B cell (primary cell): ENCODE measurements at regions of chr10 and their contacts with region 1.

Region 1: DNA sequence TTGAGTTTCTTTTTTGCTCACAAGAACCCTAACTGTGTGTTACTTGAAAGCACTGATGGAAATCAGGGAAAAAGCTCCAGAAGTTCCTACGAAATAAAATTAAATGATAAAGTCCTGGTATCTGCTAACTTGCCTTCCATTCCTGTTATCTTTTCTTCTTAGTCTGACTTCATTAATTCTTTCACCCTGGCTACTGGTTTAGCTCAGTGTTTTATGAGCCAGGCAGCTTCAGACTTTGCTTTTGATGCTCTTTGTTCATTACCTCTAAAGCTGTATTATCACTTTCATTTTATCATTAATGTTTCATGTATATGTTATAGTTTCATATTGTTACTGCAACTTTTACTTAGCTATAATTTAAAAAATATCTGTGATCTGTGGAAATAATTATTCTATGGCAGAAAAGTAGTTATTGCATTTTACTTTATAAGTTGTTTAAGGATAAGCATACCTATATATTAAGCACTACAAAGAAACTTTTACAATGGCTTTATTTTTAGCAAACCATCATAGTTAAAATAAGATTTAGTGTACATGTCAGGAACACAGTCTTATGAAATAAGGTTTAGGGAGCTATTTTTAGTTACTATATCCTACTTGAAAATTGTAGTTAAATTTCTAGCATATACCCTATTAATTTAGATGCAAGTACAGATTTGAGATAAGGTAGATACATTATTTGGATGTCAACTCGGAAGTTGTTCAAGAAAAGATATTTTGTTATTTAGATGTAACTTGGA is 19.3 kb downstream of the PTEN start:
- DNase-seq: no peak
- ATAC-seq: no peak
- H3K4me3 ChIP-seq: no peak overlapping the region
- H3K4me3 Mint-ChIP-seq: no peak overlapping the region
- H3K27ac ChIP-seq: peak overlapping the region in 1 of 2 donors; percentile 4
- H3K27ac Mint-ChIP-seq: no peak overlapping the region
- H3K4me1 ChIP-seq: no peaks in the 10 kb centered on the region
- H3K4me1 Mint-ChIP-seq: peaks cover 36% of the 10 kb centered on the region
- H3K27me3 ChIP-seq: no peaks in the 10 kb centered on the region
- H3K27me3 Mint-ChIP-seq: no peaks in the 10 kb centered on the region
- CTCF ChIP-seq: no peak

Region 2: DNA sequence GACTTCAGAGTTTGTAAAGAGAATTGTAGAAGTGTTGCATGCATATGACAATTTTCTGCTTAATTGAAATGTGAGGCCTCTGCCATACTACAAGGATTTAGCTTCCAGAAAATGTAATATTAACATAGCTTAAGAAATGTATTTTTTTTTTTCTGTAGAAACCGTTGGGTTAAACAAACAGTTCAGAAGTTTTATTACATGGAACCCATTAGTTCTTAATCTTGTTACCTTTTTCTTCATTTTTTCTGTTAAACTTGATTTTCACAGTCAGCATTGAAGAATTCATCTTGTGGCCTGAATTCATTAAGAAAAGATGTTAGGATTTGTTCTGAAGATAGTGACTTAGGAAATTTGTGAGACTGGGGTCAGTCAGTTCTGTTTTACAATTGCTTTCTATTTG is 14.4 kb before region 1 on chr10:
- CTCF ChIA-PET with region 1: no interaction called
- POLR2A ChIA-PET with region 1: no interaction called
- intact Hi-C with region 1: loop called (anchors 2 kb)
- DNase-seq: no peak
- ATAC-seq: no peak
- H3K4me3 ChIP-seq: peak overlapping the region in 3 of 5 experiments; percentile 10 to 99 (median 89)
- H3K4me3 Mint-ChIP-seq: peak overlapping the region; percentile 73
- H3K27ac ChIP-seq: peak overlapping the region in 1 of 2 donors; percentile 22
- H3K27ac Mint-ChIP-seq: no peak overlapping the region
- H3K4me1 ChIP-seq: peaks cover 16 to 35% of the 10 kb centered on the region in 2 donors
- H3K4me1 Mint-ChIP-seq: peaks cover 63% of the 10 kb centered on the region
- H3K27me3 ChIP-seq: no peaks in the 10 kb centered on the region
- H3K27me3 Mint-ChIP-seq: no peaks in the 10 kb centered on the region
- CTCF ChIP-seq: no peak

Region 3: GRCh38 chr10:88091490-88092105 is 208.9 kb after region 1 on chr10:
- CTCF ChIA-PET with region 1: no interaction called
- POLR2A ChIA-PET with region 1: no interaction called
- intact Hi-C with region 1: no loop called
- DNase-seq: peak; percentile 81
- ATAC-seq: peak; percentile 86
- H3K4me3 ChIP-seq: no peak overlapping the region
- H3K4me3 Mint-ChIP-seq: no peak overlapping the region
- H3K27ac ChIP-seq: peak overlapping the region; percentile 39 to 57
- H3K27ac Mint-ChIP-seq: peak overlapping the region; percentile 79
- H3K4me1 ChIP-seq: peaks cover 28 to 29% of the 10 kb centered on the region in 2 donors
- H3K4me1 Mint-ChIP-seq: peaks cover 37% of the 10 kb centered on the region
- H3K27me3 ChIP-seq: no peaks in the 10 kb centered on the region
- H3K27me3 Mint-ChIP-seq: no peaks in the 10 kb centered on the region
- CTCF ChIP-seq: no peak

Region 4: GRCh38 chr10:88974446-88975376 is 1092.0 kb after region 1 on chr10:
- CTCF ChIA-PET with region 1: no interaction called
- POLR2A ChIA-PET with region 1: no interaction called
- intact Hi-C with region 1: no loop called
- DNase-seq: peak; percentile 52
- ATAC-seq: peak; percentile 36
- H3K4me3 ChIP-seq: peak overlapping the region; percentile 37 to 83 (median 72)
- H3K4me3 Mint-ChIP-seq: peak overlapping the region; percentile 93
- H3K27ac ChIP-seq: peak overlapping the region in 1 of 2 donors; percentile 70
- H3K27ac Mint-ChIP-seq: peak overlapping the region; percentile 91
- H3K4me1 ChIP-seq: peaks cover 8 to 9% of the 10 kb centered on the region in 2 donors
- H3K4me1 Mint-ChIP-seq: peaks cover 14% of the 10 kb centered on the region
- H3K27me3 ChIP-seq: no peaks in the 10 kb centered on the region
- H3K27me3 Mint-ChIP-seq: no peaks in the 10 kb centered on the region
- CTCF ChIP-seq: no peak